Ascending aorta (tissue), 2 donors: ENCODE measurements at regions of chr10 and their contacts with region 1.

Region 1: GRCh38 chr10:78972947-78973900 is 95.5 kb upstream of the ZMIZ1 start:
- DNase-seq: peak; percentile 49 to 90
- H3K4me3 ChIP-seq: peak overlapping the region; percentile 64 to 67
- H3K27ac ChIP-seq: peak overlapping the region; percentile 95 to 98
- H3K4me1 ChIP-seq: peaks cover 6 to 22% of the 10 kb centered on the region in 2 donors
- H3K27me3 ChIP-seq: no peaks in the 10 kb centered on the region
- CTCF ChIP-seq: no peak

Region 2: DNA sequence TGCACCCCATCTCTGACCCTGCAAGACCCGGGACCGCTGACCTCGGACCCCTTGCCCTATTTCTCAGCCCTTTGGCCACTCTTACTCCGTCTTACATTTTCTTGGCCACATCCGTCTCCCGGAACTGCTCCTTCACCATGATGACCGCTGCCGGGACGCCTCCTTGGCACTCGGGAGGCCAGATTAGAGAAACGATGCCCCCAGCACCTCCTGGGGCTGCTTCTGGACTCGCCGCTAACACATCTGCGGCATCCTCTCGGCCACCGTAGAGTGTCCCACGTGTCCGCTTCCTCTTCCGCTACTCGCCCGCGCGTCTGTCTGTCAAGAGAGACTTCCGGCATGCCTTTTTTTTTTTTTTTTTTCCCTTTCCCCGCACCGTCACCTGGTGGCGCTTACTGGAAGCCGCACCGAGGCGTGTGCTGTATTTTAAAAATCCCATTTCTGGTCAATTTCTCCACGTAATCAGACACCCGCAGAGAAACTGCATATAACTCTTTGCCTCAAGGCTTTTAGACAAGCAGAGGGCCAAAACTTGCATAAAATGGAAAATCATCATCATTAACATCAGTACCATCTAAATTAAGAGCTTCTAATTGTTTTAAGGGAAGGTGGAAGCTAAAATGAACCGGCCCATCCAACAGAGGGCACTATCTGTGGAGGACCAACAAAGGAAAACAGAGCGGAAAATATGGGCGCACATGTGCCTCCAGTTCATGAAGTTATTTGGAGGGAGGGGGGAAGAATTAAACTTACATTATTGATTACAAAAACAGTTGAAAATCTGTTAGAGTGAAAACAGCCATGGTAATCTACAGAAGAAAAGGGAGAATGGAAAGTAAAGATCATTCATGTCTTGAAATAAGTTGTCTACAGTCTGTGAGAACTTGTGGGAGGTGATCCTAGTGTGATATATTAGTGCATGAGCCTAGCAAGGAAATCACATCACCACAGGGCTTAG is 943.7 kb before region 1 on chr10 and contains the start of gene POLR3A:
- intact Hi-C with region 1: loop called (anchors 5 kb)
- DNase-seq: peak; percentile 82 to 98
- H3K4me3 ChIP-seq: peak within 1 kb of the TSS; percentile 96
- H3K27ac ChIP-seq: peak within 1 kb of the TSS; percentile 73 to 82
- H3K4me1 ChIP-seq: peaks cover 9 to 15% of the 10 kb centered on the region in 2 donors
- H3K27me3 ChIP-seq: no peaks in the 10 kb centered on the region
- CTCF ChIP-seq: peak; percentile 58 to 79 (median 69)
- total RNA-seq, gene POLR3A: 18.6 TPM

Region 3: DNA sequence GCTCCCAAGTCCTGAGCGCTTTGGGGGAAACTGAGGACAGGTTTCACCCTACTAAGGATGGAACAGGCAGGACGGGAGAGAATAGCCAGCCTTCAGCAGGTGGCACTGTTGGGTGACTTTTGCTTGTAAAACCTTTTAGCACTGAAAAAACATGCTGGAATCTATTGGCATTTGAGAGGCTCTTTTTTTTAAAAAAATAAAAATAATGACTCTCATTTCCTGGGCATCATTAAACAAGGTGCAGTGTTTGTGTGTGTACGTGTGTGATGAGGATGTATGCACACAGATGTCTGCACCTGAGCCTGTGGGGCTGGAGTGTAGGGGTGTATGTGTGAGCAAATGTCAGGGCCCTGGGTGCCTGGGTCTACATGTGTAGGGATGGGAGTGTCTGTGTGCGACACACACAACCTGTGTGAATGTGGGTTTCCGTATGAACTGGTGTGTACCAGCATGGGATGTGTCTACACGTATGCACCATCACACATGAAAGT is 761.6 kb before region 1 on chr10:
- intact Hi-C with region 1: loop called (anchors 10 kb)
- DNase-seq: no peak
- H3K4me3 ChIP-seq: no peak overlapping the region
- H3K27ac ChIP-seq: no peak overlapping the region
- H3K4me1 ChIP-seq: peaks cover 4 to 13% of the 10 kb centered on the region in 2 donors
- H3K27me3 ChIP-seq: no peaks in the 10 kb centered on the region
- CTCF ChIP-seq: peak; percentile 42 to 72 (median 45)

Region 4: GRCh38 chr10:78802866-78803265 is 170.4 kb before region 1 on chr10:
- intact Hi-C with region 1: no loop called
- DNase-seq: peak in 1 of 2 donors; percentile 71
- H3K4me3 ChIP-seq: no peak overlapping the region
- H3K27ac ChIP-seq: peak overlapping the region in 1 of 2 donors; percentile 71
- H3K4me1 ChIP-seq: peaks cover 11 to 14% of the 10 kb centered on the region in 2 donors
- H3K27me3 ChIP-seq: no peaks in the 10 kb centered on the region
- CTCF ChIP-seq: no peak

Region 5: DNA sequence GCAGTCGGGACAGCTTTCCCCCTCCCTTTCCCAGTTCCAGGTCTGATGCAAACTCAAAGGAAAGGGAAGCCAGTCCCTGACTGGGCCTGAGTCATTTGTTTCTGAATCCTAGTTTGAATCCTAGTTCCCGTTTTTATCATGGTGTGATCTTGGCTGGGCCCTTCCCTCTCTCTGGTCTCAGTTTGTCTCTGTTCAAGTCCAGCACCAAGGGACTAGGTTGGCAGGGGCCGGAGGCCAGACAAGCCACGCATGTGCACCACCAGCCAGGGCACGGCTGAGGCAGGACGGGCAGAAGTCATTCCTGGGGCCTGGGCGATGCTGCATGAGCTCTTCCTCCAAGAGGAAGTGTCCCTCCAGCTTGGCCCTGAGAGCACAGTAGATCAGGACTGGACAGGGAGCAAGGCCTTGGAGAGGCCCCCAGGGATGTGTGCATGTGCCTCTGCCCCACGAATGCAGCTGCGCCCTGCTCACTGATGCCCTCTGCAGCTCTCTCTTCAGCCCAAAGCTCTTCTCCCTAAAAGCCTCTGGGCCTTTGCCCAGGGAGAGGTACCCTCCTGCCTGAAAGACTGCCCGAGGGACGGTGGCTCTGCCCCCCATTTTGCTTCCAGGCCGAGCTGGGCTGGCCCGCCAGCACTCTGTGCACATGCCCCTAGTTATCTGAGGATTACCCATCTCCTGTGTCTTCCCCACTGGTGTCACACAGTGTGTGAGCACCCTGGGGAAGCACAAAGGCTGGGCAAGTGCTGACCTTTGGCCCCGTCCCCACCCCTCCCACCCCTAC is 182.3 kb after region 1 on chr10:
- intact Hi-C with region 1: loop called (anchors 2 kb)
- DNase-seq: peak in 1 of 2 donors; percentile 84
- H3K4me3 ChIP-seq: no peak overlapping the region
- H3K27ac ChIP-seq: peak overlapping the region; percentile 87 to 88
- H3K4me1 ChIP-seq: peaks cover 56 to 100% of the 10 kb centered on the region in 2 donors
- H3K27me3 ChIP-seq: no peaks in the 10 kb centered on the region
- CTCF ChIP-seq: peak in 1 of 3 experiments; percentile 24

Region 6: DNA sequence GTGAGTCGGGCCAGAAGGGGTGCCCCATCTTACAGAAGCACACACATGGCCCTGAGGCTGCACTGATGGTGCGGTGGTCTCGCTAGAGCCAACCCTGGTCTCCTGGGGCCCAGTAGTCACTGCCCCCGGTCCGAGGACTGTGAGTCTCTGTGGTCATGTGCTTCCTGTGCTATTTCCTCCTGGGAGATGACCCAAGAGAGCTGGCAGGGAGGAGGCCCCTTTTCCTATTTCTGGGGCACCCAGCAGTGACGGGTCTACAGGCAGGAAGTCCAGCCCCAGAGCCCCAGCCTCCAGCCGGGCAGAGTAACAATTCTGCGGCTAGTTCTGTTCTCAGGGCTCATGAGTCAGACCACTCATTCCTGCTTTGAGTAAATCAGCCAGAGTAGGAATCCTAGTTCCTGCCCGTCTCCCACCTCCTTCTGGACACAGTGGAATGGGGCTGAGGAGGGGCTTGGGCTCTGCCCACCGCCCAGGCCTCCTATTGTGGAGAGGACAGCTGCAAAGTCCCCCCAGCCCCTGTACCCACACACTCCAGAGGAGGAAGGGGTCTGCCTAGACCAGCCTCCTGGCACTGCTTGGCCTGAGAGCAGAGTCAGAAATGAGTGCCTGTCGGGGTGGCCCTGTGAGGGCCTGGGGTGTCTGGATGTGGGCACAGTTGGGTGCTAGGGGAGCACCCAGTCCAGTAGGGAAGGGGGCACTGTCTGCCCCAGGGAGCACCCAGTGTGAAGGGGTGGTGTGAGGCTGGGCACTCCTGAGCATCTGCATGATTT is 293.5 kb after region 1 on chr10:
- intact Hi-C with region 1: loop called (anchors 5 kb)
- DNase-seq: peak; percentile 86 to 96
- H3K4me3 ChIP-seq: peak overlapping the region in 1 of 2 donors; percentile 7
- H3K27ac ChIP-seq: peak overlapping the region; percentile 92 to 95
- H3K4me1 ChIP-seq: peaks cover 28 to 40% of the 10 kb centered on the region in 2 donors
- H3K27me3 ChIP-seq: no peaks in the 10 kb centered on the region
- CTCF ChIP-seq: no peak